ENCODE measurements at regions of chr12 and their contacts with region 1.

Region 1: GRCh38 chr12:96215919-96216273 is 21.7 kb downstream of the ELK3 start:
- DNase-seq: no peak
- H3K4me3 ChIP-seq: no peak overlapping the region
- H3K27ac ChIP-seq: no peak overlapping the region; a peak in 1 of 4 replicates
- H3K4me1 ChIP-seq: peaks cover 11 to 17% of the 10 kb centered on the region in 2 experiments
- H3K27me3 ChIP-seq: no peaks in the 10 kb centered on the region
- CTCF ChIP-seq: no peak
- EP300 ChIP-seq: no peak
- RAD21 ChIP-seq: no peak

Region 2: DNA sequence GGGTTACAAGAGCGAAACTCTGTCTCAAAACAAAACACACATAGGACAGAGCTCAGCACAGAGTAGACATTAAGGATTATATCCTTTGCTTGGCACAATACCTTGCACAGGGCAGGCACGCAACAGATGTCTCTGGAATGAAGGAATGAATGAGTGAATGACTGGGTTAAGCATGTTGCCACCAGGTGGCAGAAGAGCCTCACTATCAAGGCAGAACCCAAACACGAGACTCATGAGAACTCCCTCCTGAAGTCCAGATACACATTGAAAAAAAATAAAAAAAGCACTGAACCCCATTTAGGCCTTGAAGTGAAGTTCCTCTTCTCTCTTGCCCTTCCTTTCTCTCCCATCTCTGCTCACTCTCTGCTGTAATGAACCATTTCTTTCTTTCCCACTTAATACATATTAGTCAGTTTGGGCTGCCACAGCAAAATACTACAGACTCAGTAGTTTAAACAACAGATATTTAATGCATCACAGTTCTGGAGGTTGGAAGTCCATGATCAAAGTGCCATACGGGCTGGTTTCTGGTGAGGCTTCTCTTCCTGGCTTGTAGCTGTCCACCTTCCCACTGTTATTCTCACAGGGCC is 153.9 kb before region 1 on chr12:
- CTCF ChIA-PET with region 1: interaction called, 84 read pairs
- POLR2A ChIA-PET with region 1: no interaction called
- DNase-seq: peak; percentile 69
- H3K4me3 ChIP-seq: peak overlapping the region in 1 of 2 experiments; percentile 36; a peak in 1 of 4 replicates
- H3K27ac ChIP-seq: no peak overlapping the region
- H3K4me1 ChIP-seq: 0 out of 4 replicates have a peak, but pooled peaks cover 0 to 4% of the 10 kb centered on the region in 2 experiments
- H3K27me3 ChIP-seq: no peaks in the 10 kb centered on the region
- CTCF ChIP-seq: peak; percentile 83
- EP300 ChIP-seq: no peak
- RAD21 ChIP-seq: peak; percentile 96

Region 3: DNA sequence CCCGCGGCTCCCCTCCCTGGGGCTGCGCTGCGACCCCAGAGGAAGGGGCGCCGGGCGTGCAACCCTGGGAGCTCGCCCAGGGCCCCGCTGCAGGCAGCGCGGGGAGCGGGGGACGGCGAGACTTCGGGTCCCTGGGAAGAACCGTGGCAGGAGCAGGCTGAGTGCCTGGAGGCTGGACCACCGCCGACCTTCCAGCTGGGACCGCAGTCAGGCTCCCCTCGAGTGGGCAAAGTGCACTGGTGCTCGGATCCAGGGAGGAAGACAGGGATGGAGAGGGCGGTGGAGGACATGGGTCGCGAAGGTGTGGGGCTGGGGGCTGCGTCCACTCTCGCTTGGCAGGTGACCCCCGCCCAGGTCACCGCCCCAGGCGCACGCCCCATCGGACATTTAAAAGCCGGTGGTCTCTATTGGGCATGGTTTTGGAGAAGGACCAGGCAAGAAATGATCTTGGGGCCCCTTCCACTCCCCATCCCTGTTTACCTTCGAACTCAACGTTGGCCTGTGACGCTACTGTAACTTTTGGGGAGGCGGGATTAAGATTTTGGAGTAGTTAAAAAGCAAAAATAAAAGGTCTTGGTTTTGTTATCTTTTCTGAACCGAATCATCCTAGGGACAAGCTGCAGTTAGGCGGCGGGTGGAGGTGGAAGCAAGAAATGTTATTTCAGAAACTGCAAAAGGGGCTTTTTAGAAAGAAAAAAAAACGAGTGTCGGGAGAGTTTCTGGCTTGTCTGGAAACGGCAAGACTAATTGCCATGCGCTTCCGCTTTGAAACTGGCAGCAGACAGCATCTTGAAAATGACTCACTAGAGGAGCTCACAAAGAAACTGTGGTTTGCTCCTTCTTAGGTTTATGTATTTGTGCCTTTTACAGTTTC is 20.7 kb before region 1 on chr12:
- CTCF ChIA-PET with region 1: interaction called, 30 read pairs
- POLR2A ChIA-PET with region 1: no interaction called
- DNase-seq: peak; percentile 77
- H3K4me3 ChIP-seq: peak overlapping the region; percentile 81 to 95
- H3K27ac ChIP-seq: peak overlapping the region; percentile 92 to 100
- H3K4me1 ChIP-seq: peaks cover 6 to 27% of the 10 kb centered on the region in 2 experiments; a peak in 3 of 4 replicates
- H3K27me3 ChIP-seq: no peaks in the 10 kb centered on the region
- CTCF ChIP-seq: no peak
- EP300 ChIP-seq: no peak
- RAD21 ChIP-seq: no peak

Region 4: DNA sequence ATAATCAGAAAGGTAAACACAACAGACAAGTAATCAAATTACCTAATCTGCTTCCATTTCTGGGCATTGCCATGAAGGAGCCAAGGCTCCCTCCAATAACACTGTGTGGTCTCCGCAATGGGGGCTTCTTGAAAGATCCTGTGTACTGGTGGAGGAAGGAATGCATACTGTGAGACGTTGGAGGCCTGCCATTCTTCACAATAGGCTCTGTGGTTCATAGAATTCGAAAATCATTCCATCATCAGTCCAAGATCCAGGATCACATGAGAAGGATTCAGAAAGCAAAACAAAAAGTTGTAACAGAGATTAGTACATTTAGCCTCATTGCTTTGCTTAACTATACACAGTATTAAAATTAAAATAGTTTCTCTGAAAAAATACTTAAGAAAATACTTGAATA is 108.0 kb after region 1 on chr12:
- CTCF ChIA-PET with region 1: no interaction called
- POLR2A ChIA-PET with region 1: no interaction called
- DNase-seq: no peak
- H3K4me3 ChIP-seq: no peak overlapping the region
- H3K27ac ChIP-seq: no peak overlapping the region
- H3K4me1 ChIP-seq: no peaks in the 10 kb centered on the region
- H3K27me3 ChIP-seq: no peaks in the 10 kb centered on the region
- CTCF ChIP-seq: no peak
- EP300 ChIP-seq: no peak
- RAD21 ChIP-seq: no peak

Region 5: GRCh38 chr12:96399919-96400797 is 184.3 kb after region 1 on chr12 and contains the start of gene CDK17:
- CTCF ChIA-PET with region 1: interaction called, 11 read pairs
- POLR2A ChIA-PET with region 1: no interaction called
- DNase-seq: peak; percentile 97
- H3K4me3 ChIP-seq: peak within 1 kb of the TSS; percentile 88 to 90
- H3K27ac ChIP-seq: peak within 1 kb of the TSS; percentile 93 to 97
- H3K4me1 ChIP-seq: peaks cover 2 to 15% of the 10 kb centered on the region in 2 experiments; a peak in 2 of 4 replicates
- H3K27me3 ChIP-seq: no peaks in the 10 kb centered on the region
- CTCF ChIP-seq: peak; percentile 39
- EP300 ChIP-seq: 0 out of 4 replicates have a peak, but pooled peaks of 1 of the 2 experiments have one; percentile 31
- RAD21 ChIP-seq: peak; percentile 44
- polyA plus RNA-seq, gene CDK17: 11.7 and 12.4 TPM in 2 replicates

Region 6: GRCh38 chr12:96456265-96456974 is 240.5 kb after region 1 on chr12:
- CTCF ChIA-PET with region 1: no interaction called
- POLR2A ChIA-PET with region 1: no interaction called
- DNase-seq: no peak
- H3K4me3 ChIP-seq: no peak overlapping the region
- H3K27ac ChIP-seq: no peak overlapping the region
- H3K4me1 ChIP-seq: no peaks in the 10 kb centered on the region
- H3K27me3 ChIP-seq: no peaks in the 10 kb centered on the region
- CTCF ChIP-seq: no peak
- EP300 ChIP-seq: no peak
- RAD21 ChIP-seq: no peak